BJ (cell line): ENCODE measurements at regions of chr1 and their contacts with region 1.

Region 1: DNA sequence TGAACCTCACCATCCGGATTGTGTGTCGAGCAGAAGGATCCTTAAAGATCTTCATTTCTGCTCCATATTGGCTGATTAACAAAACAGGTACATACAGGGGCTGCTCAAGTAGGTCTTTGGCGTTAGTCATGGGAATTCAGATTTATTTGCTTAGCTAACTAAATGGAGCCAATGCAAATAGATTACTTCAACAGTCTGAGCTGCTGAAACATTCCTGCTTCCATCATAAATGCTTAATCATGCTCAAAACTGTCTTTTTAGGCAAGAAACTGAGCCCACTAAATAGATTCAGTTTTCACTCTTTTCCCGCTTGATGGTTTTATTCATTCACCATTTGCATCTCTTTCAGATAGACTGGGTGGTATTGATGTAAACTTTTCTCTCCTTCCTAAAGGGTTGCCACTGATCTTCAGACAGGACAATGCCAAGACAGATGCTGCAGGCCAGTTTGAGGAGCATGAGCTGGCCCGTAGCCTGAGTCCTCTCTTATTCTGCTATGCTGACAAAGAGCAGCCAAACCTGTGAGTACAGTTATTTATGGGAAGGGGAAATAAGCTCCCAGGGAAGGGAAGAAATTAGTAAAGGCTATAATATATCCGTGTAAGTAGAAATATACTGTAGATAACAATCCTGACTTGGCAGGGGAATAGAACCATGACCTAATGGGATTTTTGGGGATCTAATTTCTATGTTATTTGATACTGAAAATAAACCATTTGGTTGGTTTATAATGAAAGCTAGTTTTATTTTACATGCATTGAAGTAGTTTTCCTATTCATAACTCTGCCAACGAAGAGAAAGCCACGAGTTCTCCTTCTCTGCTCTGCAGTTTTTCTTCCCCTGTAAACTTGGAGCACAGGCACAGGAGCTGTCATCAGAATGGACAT is 126.4 kb downstream of the VPS13D start:
- DNase-seq: no peak
- H3K4me3 ChIP-seq: no peak overlapping the region
- H3K27me3 ChIP-seq: no peaks in the 10 kb centered on the region
- CTCF ChIP-seq: no peak

Region 2: DNA sequence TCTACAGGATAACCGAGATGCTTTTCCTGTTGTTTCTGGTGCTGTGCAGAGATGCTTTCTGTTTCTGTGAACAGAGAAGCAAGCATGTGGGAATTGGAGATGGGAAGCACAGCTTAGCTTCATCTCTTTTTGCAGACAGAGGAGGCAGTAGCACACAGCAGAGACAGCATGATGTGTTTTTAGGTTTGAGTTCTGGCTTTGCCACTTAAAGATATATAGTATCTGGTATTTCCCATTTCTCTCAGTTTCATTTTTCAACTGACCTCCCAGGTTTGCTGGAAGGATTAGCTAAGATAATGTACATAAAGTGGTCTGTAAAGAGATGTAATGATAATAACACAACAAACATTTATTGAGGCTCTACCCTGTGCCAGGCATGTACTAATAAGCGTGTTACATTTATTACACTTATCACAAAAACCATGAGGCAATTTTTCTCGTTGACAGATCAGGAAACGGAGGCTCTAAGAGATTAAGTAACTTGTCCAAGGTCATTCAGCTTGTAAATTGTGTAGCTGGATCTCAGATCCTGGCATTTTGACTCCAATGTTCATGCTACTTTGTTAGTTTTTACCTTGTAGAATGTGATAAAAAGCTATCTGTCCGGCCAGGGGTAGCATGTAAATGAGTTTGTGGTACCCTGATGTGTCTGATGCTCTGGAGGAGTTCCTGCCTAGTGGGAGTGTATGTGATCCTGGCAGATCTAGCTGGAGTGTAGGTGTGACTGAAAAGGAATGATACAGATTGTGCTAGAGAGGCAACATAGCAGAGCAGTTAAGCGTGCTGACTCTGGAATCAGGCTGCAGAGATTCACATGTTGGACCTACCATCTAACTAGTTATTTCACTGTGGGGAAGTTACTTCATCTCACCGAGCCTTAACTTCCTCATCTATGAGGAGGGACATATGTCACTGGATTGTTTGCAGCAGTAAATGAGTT is 20.1 kb after region 1 on chr1:
- CTCF ChIA-PET with region 1: no interaction called
- POLR2A ChIA-PET with region 1: interaction called, 20 read pairs
- DNase-seq: no peak
- H3K4me3 ChIP-seq: no peak overlapping the region
- H3K27me3 ChIP-seq: no peaks in the 10 kb centered on the region
- CTCF ChIP-seq: no peak

Region 3: GRCh38 chr1:12549460-12550349 is 193.5 kb after region 1 on chr1:
- CTCF ChIA-PET with region 1: no interaction called
- POLR2A ChIA-PET with region 1: no interaction called
- DNase-seq: peak; percentile 92
- H3K4me3 ChIP-seq: no peak overlapping the region
- H3K27me3 ChIP-seq: peaks cover 1% of the 10 kb centered on the region; the same call in 1 of the 2 replicates
- CTCF ChIP-seq: no peak